Activated naive CD4-positive, alpha-beta T cell treated with anti-CD3 and anti-CD28 coated beads for 36 hours (primary cell): ENCODE measurements at regions of chr3 and their contacts with region 1.

Region 1: DNA sequence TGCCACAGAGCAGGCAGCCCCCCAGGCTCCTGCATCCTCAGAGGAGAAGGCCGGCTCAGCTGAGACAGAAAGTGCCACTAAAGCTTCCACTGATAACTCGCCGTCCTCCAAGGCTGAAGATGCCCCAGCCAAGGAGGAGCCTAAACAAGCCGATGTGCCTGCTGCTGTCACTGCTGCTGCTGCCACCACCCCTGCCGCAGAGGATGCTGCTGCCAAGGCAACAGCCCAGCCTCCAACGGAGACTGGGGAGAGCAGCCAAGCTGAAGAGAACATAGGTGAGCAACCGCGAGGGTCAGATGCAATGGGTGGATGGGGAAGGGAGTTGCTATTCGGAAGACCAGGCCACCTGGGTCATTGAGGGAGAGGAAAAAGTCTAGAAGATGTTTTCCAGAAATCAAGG is 53.0 kb downstream of the GAP43 start:
- DNase-seq: no peak
- H3K4me3 Mint-ChIP-seq: no peak overlapping the region
- H3K27ac Mint-ChIP-seq: no peak overlapping the region
- H3K4me1 Mint-ChIP-seq: peaks cover 4% of the 10 kb centered on the region
- H3K27me3 Mint-ChIP-seq: peaks cover 39% of the 10 kb centered on the region

Region 2: GRCh38 chr3:115418583-115418982 is 257.8 kb before region 1 on chr3:
- CTCF ChIA-PET with region 1: no interaction called
- intact Hi-C with region 1: loop called (anchors 5 kb)
- DNase-seq: peak; percentile 6
- H3K4me3 Mint-ChIP-seq: no peak overlapping the region
- H3K27ac Mint-ChIP-seq: peak overlapping the region; percentile 51
- H3K4me1 Mint-ChIP-seq: peaks cover 9% of the 10 kb centered on the region
- H3K27me3 Mint-ChIP-seq: no peaks in the 10 kb centered on the region

Region 3: DNA sequence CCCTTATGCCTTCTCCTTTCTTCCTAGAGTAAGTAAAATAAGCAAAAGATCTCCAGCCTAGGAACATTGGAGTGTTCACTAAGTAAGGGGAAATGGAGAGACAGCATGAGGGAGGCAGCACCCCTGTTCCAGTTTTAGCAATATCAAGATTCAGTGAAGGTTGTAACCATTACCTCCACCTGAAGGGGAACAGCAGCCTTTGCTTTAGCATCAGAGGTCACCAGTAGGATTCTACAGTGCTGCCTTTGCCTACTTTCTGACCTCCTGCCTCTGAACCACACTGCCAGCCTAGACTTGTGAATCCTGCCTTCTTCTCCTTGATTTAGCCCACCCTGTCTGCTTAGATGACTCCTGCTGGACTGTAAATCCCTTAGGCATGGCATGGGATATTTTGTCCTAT is 51.7 kb after region 1 on chr3:
- CTCF ChIA-PET with region 1: no interaction called
- intact Hi-C with region 1: no loop called
- DNase-seq: no peak
- H3K4me3 Mint-ChIP-seq: no peak overlapping the region
- H3K27ac Mint-ChIP-seq: no peak overlapping the region
- H3K4me1 Mint-ChIP-seq: no peaks in the 10 kb centered on the region
- H3K27me3 Mint-ChIP-seq: peaks cover 3% of the 10 kb centered on the region